ENCODE measurements at regions of chr5 and their contacts with region 1.

Region 1: DNA sequence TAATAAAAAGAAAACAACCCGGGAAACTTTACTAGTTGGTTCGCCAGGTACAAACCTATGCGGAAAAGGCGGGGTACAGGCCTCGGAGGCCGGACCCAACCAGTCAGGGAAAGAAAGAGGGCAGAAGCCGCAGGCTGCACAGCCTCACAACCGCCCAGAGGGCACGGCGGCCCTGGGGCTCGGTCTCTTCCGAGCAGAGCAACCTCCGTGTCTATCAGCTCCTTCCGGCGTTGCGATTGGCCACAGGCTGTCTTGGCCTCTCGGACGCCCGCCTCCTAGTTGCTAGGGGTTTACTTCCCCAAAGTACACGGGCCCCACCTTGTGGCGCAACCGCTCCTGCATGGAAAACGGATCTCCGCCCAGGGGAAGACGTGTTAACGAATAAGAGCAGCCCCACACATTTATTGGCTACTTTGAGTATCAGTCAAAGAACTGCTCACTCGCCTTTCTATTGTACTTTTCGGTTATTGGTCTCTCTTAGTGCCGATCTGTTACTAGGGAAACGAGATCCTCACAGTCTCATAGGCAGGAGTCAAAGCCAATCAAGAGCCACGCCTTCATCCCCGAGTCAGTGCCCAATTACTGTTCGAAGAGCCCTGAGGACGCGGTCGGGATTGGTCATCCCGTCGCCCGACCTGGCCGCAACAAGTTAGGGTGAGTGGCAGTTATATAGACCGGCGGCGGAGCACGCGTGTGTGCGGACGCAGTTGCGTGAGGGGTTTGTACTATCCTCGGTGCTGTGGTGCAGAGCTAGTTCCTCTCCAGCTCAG is at the start of gene G3BP1:
- DNase-seq: peak; percentile 100
- H3K4me3 Mint-ChIP-seq: peak within 1 kb of the TSS; percentile 81
- H3K27ac Mint-ChIP-seq: peak within 1 kb of the TSS; percentile 69
- H3K4me1 Mint-ChIP-seq: peaks cover 35% of the 10 kb centered on the region
- H3K27me3 Mint-ChIP-seq: no peaks in the 10 kb centered on the region
- total RNA-seq, gene G3BP1: 198 to 210 TPM

Region 2: DNA sequence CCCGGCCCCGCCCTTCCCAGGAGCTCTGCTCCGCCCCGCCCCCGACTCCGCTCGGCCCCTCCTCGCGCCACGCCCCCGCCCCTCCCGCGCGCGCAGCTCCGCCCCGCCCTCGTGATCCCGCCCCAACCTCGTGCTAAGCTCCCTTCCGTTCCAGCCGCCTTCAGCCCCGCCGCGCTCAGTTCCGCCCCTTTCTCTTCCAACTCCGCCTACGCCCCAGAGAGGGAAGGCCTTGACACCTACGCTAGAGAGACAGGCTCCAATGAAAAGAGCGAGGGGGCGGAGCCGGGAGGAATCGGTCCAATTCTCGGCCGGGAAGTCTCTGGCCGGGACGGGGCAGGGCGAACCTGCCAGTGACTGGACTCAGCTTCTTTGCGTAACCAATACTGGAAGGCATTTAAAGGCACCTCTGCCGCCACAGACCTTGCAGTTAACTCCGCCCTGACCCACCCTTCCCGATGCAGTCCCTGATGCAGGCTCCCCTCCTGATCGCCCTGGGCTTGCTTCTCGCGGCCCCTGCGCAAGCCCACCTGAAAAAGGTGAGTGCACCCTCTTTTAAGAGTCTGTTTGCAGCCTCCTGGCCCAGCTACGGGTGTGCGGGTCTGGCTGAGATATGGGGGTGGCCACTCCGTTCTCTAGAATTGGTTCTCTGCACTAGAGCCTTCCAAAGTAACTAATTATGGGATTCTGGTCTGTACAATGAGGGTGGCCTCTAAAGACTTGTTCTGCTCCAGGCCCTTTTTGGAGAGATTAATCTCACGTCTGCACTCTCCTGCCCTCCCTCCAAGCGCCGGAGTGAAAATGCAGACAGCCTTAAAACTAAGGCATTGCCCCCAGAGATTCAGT is 518.5 kb before region 1 on chr5 and contains the start of gene GM2A:
- CTCF ChIA-PET with region 1: interaction called, 5 read pairs
- POLR2A ChIA-PET with region 1: interaction called, 14 read pairs
- DNase-seq: peak; percentile 99
- H3K4me3 Mint-ChIP-seq: peak within 1 kb of the TSS; percentile 82
- H3K27ac Mint-ChIP-seq: peak within 1 kb of the TSS; percentile 92
- H3K4me1 Mint-ChIP-seq: peaks cover 51% of the 10 kb centered on the region
- H3K27me3 Mint-ChIP-seq: no peaks in the 10 kb centered on the region
- total RNA-seq, gene GM2A: 22.4 to 24.5 TPM

Region 3: DNA sequence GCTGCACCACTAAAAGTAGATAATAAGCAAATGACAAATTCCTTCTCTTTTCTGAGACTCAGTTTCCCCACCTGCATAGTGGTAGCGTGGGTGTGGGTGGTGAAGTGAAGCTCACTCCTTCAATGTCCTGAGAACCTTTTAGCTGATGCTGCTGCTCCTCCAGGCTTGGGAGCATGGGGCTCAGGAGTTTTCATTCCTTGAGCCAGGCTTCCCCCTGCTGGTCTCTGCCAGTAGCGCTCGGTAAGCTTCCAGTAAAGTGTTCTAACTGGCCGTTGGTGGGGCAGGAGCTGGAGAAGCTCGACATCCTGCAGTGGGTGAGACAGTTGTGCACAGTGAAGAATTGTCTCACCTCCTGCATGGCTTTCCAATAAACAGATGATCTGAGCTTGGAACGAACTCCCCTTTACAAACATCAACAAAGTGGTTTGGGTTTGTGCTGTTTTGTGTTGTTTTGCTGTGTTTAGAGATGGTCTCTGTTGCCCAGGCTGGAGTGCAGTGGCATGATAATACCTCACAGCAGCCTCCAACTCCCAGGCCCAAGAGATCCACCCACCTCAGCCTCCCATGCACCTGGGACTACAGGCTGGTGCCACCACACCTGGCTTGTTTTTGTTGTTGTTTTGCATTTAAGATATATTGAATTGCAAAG is 119.3 kb before region 1 on chr5:
- CTCF ChIA-PET with region 1: interaction called, 19 read pairs
- POLR2A ChIA-PET with region 1: interaction called, 8 read pairs
- DNase-seq: peak; percentile 72
- H3K4me3 Mint-ChIP-seq: no peak overlapping the region
- H3K27ac Mint-ChIP-seq: no peak overlapping the region
- H3K4me1 Mint-ChIP-seq: no peaks in the 10 kb centered on the region
- H3K27me3 Mint-ChIP-seq: peaks cover 9% of the 10 kb centered on the region

Region 4: DNA sequence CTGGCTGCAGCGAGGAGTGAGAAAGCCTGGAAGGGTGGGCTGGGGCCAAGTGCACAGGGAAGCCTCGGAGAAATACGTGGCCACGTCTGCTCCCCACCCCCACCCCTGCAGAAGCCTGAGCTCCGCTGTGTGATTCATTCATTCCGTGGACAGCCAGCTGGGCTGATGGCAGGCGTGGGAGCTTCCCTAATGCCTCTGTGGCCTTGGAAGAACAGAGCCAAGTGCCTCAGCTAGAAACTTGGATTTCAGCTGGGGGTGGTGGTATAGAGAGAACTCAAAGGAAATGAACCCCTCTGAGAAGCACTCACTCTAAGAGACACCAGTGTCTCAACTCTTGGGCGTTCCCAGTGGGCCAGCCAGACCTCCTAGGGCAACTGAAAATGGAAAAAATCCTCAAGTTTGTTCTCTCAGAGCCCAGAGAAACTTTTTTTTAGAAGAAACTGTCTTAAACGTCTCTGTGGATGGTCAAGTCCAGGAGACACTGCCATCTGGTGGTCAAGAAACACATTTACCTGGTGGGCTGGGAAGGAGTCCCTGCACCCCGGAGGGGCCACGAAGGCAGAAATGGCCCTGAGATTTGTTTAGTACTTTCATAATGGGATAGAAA is 31.0 kb before region 1 on chr5:
- CTCF ChIA-PET with region 1: interaction called, 14 read pairs
- POLR2A ChIA-PET with region 1: interaction called, 129 read pairs
- DNase-seq: peak; percentile 48
- H3K4me3 Mint-ChIP-seq: no peak overlapping the region
- H3K27ac Mint-ChIP-seq: no peak overlapping the region
- H3K4me1 Mint-ChIP-seq: peaks cover 38% of the 10 kb centered on the region
- H3K27me3 Mint-ChIP-seq: no peaks in the 10 kb centered on the region

Region 5: GRCh38 chr5:151758430-151759241 is 12.8 kb before region 1 on chr5 and contains the start of gene ATOX1:
- CTCF ChIA-PET with region 1: interaction called, 22 read pairs
- POLR2A ChIA-PET with region 1: interaction called, 184 read pairs
- DNase-seq: peak; percentile 93
- H3K4me3 Mint-ChIP-seq: peak within 1 kb of the TSS; percentile 78
- H3K27ac Mint-ChIP-seq: peak within 1 kb of the TSS; percentile 80
- H3K4me1 Mint-ChIP-seq: peaks cover 35% of the 10 kb centered on the region
- H3K27me3 Mint-ChIP-seq: no peaks in the 10 kb centered on the region
- total RNA-seq, gene ATOX1: 62.6 to 64.3 TPM